ENCODE measurements at regions of chr12 and their contacts with region 1.

Region 1: GRCh38 chr12:71128191-71128788 is 29.5 kb downstream of the TSPAN8 start:
- DNase-seq: no peak
- H3K4me3 ChIP-seq: no peak overlapping the region
- H3K27ac ChIP-seq: no peak overlapping the region
- H3K4me1 ChIP-seq: no peaks in the 10 kb centered on the region
- H3K27me3 ChIP-seq: no peaks in the 10 kb centered on the region
- CTCF ChIP-seq: no peak
- POLR2A ChIP-seq: no peak

Region 2: GRCh38 chr12:71085575-71085974 is 42.7 kb before region 1 on chr12:
- CTCF ChIA-PET with region 1: no interaction called
- POLR2A ChIA-PET with region 1: no interaction called
- dilution Hi-C with region 1: no loop called
- intact Hi-C with region 1: loop called (anchors 5 kb)
- DNase-seq: no peak
- H3K4me3 ChIP-seq: no peak overlapping the region
- H3K27ac ChIP-seq: no peak overlapping the region
- H3K4me1 ChIP-seq: no peaks in the 10 kb centered on the region
- H3K27me3 ChIP-seq: no peaks in the 10 kb centered on the region
- CTCF ChIP-seq: no peak
- POLR2A ChIP-seq: no peak

Measured in endothelial cell of umbilical vein (primary cell).